Head of caudate nucleus (tissue), 42 donors: ENCODE measurements at regions of chr17 and their contacts with region 1.

Region 1: GRCh38 chr17:75515496-75516254 is at the start of gene CASKIN2:
- DNase-seq: peak; percentile 90 to 99 (median 97)

Region 2: GRCh38 chr17:75430159-75430974 is 85.3 kb before region 1 on chr17:
- intact Hi-C with region 1: loop called (anchors 2 kb)
- DNase-seq: no peak

Region 3: GRCh38 chr17:75456417-75457046 is 59.1 kb before region 1 on chr17 and contains the start of gene TMEM94:
- intact Hi-C with region 1: loop called (anchors 5 kb)
- DNase-seq: peak; percentile 90 to 99 (median 97)

Region 4: GRCh38 chr17:75589012-75589918 is 73.6 kb after region 1 on chr17:
- intact Hi-C with region 1: loop called (anchors 5 kb)
- DNase-seq: peak; percentile 82 to 99 (median 95)